CD8-positive, alpha-beta memory T cell (primary cell): ENCODE measurements at regions of chr11 and their contacts with region 1.

Region 1: DNA sequence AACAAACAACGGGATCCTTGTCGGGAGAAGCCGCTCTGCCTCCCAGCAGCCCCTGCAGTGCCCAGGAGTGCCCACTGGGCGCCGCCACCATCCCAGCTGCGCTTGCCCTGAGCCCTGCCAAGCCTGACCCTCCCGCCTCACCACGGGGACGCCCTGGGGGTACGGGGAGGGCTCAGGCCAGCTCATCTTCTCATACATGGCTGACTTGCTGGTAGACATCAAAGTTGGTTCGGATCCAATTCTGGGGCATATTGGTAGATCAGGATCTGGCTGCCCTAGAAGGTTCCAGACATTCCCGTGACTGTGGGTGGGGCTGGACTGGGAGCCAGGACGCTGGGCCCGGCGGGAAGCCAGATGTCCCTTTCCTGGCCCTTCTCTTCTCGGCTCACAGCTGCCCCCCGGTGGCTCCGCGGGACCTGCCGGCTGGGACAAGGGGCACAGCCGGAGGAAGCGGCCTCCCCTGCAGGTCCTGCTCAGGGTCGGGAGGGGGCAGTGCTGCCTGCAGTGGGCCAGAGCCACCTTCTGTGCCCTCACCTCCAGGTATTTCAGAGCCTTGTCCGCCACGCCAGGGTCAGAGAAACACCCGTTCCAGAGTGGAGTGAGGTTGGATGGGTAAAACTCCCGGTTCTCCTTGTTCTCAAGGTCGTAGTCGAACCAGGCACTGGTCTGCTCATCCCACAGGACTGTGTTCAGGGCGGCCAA is 10.6 kb upstream of the TREH start:
- DNase-seq: peak; percentile 69 to 89 (median 82)
- H3K4me3 ChIP-seq: peak overlapping the region; percentile 71
- H3K4me3 Mint-ChIP-seq: peak overlapping the region; percentile 18 to 90 (median 68)
- H3K27ac ChIP-seq: no peak overlapping the region
- H3K27ac Mint-ChIP-seq: peak overlapping the region in 7 of 8 donors; percentile 42 to 98 (median 79)
- H3K4me1 ChIP-seq: peaks cover 48% of the 10 kb centered on the region
- H3K4me1 Mint-ChIP-seq: peaks cover 50 to 56% (median 56%) of the 10 kb centered on the region in 3 donors
- H3K27me3 ChIP-seq: peaks cover 4% of the 10 kb centered on the region
- H3K27me3 Mint-ChIP-seq: peaks cover 0 to 5% of the 10 kb centered on the region in 2 donors

Region 2: DNA sequence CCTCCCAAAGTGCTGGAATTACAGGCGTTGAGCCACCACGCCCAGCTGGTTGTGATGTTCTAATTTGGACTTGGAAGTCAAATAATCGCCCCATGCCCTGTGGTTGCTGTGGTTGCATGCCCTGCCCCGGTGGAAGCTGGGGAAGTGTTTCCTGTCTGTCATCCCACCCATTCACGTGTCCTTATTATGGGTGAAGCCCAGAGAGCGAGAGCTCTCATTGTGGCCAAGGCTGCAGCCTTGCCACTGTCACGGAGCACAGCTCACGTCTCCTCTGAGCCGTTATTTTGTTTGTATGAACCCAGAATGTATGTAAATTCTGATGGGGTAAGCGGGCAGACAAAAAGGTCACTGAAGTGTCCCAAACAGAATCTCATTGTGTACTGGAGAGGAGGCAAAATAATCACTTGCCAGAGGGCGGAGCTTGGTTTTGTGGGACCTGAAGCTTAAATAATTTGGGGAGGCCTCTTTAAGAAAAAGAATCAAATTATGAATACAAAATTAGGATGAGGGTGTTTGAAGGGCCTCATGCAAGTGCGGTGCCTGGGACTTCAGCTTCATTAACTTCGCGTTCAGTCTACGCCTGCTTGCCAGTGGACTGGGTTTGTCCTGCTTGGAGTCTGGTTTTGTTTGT is 15.2 kb after region 1 on chr11:
- CTCF ChIA-PET with region 1: interaction called, 37 read pairs
- POLR2A ChIA-PET with region 1: interaction called, 26 read pairs
- DNase-seq: peak; percentile 29 to 75 (median 70)
- H3K4me3 ChIP-seq: peak overlapping the region; percentile 21
- H3K4me3 Mint-ChIP-seq: peak overlapping the region; percentile 8 to 81 (median 64)
- H3K27ac ChIP-seq: no peak overlapping the region
- H3K27ac Mint-ChIP-seq: peak overlapping the region; percentile 67 to 96 (median 83)
- H3K4me1 ChIP-seq: peaks cover 44% of the 10 kb centered on the region
- H3K4me1 Mint-ChIP-seq: peaks cover 32 to 50% (median 46%) of the 10 kb centered on the region in 3 donors
- H3K27me3 ChIP-seq: no peaks in the 10 kb centered on the region
- H3K27me3 Mint-ChIP-seq: no peaks in the 10 kb centered on the region

Region 3: DNA sequence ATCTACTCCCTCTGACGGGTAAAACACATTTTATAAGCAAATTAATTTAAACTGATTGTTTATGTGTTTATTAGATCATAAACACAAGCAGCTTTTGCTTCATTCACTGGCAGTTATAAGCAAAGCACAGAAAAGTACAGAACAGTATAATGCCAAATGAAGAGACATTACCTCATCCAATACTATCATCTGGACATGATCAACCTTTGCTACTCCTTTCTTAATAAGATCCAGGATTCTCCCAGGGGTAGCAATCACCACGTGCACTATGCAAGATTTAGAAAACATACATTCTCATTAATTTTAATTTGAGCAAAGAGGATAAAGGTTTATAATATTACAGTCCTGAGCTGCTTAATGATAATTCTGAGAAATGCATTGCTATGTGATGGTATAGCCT is 73.0 kb after region 1 on chr11:
- CTCF ChIA-PET with region 1: interaction called, 20 read pairs
- POLR2A ChIA-PET with region 1: no interaction called
- DNase-seq: no peak
- H3K4me3 ChIP-seq: no peak overlapping the region
- H3K4me3 Mint-ChIP-seq: no peak overlapping the region
- H3K27ac ChIP-seq: no peak overlapping the region
- H3K27ac Mint-ChIP-seq: peak overlapping the region in 1 of 8 donors; percentile 30
- H3K4me1 ChIP-seq: peaks cover 10% of the 10 kb centered on the region
- H3K4me1 Mint-ChIP-seq: peaks cover 29 to 40% (median 38%) of the 10 kb centered on the region in 3 donors
- H3K27me3 ChIP-seq: no peaks in the 10 kb centered on the region
- H3K27me3 Mint-ChIP-seq: peaks cover 0 to 4% of the 10 kb centered on the region in 2 donors

Region 4: GRCh38 chr11:118791111-118791965 is 101.3 kb after region 1 on chr11 and contains the start of gene DDX6:
- CTCF ChIA-PET with region 1: interaction called, 122 read pairs
- POLR2A ChIA-PET with region 1: interaction called, 25 read pairs
- DNase-seq: peak; percentile 84 to 94 (median 87)
- H3K4me3 ChIP-seq: peak within 1 kb of the TSS; percentile 68
- H3K4me3 Mint-ChIP-seq: peak within 1 kb of the TSS; percentile 94 to 100 (median 100)
- H3K27ac ChIP-seq: peak within 1 kb of the TSS; percentile 94
- H3K27ac Mint-ChIP-seq: peak within 1 kb of the TSS; percentile 99 to 100 (median 99)
- H3K4me1 ChIP-seq: peaks cover 27% of the 10 kb centered on the region
- H3K4me1 Mint-ChIP-seq: peaks cover 23 to 34% (median 31%) of the 10 kb centered on the region in 3 donors
- H3K27me3 ChIP-seq: no peaks in the 10 kb centered on the region
- H3K27me3 Mint-ChIP-seq: no peaks in the 10 kb centered on the region
- total RNA-seq, gene DDX6: 187 to 189 TPM

Region 5: DNA sequence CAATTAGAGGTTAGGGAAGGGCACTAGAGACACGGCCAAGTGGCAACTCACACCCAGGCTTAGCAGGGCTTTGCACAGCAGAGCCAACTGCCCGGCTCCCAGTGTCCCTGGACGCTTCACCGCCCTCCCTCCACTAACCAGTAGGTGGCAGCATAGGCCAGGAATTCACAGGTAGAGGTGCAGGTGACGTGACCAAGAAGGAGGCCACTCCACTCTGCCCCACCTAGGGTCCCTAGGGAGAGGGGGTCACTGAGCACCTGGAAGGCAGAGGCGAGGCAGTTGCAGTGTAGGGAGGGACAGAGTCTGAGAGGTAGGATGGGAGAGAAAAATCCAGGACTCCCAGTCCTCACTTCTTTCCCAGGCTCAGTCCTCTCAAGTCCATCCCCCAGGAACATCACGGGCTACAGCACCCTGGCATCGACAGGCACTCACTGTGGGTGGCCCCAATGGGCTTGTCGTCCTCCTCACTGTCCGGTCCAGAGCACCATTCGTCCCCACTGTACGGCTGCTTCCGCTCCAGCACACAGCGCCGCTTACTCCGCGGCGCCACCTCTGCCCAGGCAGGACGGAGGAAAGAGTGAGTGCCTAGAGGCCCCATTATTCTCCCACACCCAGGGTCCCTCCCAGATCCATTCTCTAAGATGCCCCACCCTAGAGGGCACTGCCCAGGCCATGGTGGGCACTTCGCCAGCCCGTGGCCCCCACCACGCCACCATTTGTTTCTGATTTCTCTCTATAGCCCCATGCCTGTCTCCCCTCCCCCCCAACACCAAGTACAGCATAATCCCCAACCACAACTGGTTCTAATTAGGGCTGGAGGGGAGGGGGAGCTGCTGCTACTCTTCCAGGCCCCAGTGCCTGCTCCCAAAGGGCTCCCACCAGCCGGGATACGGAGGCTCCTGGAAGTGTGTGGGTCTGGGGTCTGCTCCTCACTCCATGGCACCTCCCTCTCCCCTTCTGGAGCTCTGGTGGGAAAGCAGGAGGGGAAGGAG is 217.3 kb after region 1 on chr11:
- CTCF ChIA-PET with region 1: interaction called, 17 read pairs
- POLR2A ChIA-PET with region 1: no interaction called
- DNase-seq: peak; percentile 74 to 88 (median 82)
- H3K4me3 ChIP-seq: no peak overlapping the region
- H3K4me3 Mint-ChIP-seq: peak overlapping the region in 5 of 7 donors; percentile 21 to 65 (median 34)
- H3K27ac ChIP-seq: no peak overlapping the region
- H3K27ac Mint-ChIP-seq: peak overlapping the region; percentile 81 to 100 (median 96)
- H3K4me1 ChIP-seq: peaks cover 57% of the 10 kb centered on the region
- H3K4me1 Mint-ChIP-seq: peaks cover 42 to 57% (median 47%) of the 10 kb centered on the region in 3 donors
- H3K27me3 ChIP-seq: no peaks in the 10 kb centered on the region
- H3K27me3 Mint-ChIP-seq: no peaks in the 10 kb centered on the region

Region 6: DNA sequence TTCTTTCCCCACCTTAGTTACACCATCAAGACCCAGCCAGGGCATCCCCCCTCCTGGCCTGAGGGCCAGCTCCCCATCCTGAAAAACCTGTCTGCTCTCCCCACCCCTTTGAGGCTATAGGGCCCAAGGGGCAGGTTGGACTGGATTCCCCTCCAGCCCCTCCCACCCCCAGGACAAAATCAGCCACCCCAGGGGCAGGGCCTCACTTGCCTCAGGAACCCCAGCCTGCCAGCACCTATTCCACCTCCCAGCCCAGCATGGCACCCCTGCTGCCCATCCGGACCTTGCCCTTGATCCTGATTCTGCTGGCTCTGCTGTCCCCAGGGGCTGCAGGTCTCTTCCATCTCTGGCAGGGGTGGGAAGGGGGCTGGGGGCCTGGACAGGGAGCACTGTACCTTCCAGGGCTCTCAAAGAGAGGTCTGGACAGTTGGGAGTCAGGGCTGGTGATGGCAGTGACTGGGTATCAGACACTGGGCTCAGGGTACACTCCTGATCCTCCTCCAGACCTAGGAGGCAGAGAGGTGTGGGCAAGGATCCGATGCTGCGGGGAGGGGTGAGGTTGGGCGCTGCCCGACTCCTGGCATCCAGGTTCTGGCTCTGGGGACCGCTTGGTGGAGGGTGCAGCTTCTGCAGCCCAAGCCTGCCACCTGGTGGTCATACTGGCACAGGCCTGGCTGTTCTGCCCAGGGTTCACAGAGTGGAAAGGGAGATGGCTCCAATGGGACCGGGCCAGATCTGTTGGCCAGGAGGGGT is 266.3 kb after region 1 on chr11 and contains the start of gene UPK2:
- CTCF ChIA-PET with region 1: interaction called, 32 read pairs
- POLR2A ChIA-PET with region 1: interaction called, 3 read pairs
- DNase-seq: peak; percentile 76 to 91 (median 86)
- H3K4me3 ChIP-seq: no peak within 1 kb of the TSS
- H3K4me3 Mint-ChIP-seq: peak within 1 kb of the TSS in 1 of 7 donors; percentile 41
- H3K27ac ChIP-seq: no peak within 1 kb of the TSS
- H3K27ac Mint-ChIP-seq: peak within 1 kb of the TSS in 4 of 8 donors; percentile 12 to 80 (median 66)
- H3K4me1 ChIP-seq: peaks cover 7% of the 10 kb centered on the region
- H3K4me1 Mint-ChIP-seq: peaks cover 3 to 9% (median 5%) of the 10 kb centered on the region in 3 donors
- H3K27me3 ChIP-seq: no peaks in the 10 kb centered on the region
- H3K27me3 Mint-ChIP-seq: peaks cover 7 to 13% of the 10 kb centered on the region in 2 donors
- total RNA-seq, gene UPK2: 0.22 TPM in 1 of 2 experiments, not detected in the other